Endothelial cell of umbilical vein (primary cell): ENCODE measurements at regions of chr7 and their contacts with region 1.

Region 1: GRCh38 chr7:37297546-37297945 is 151.1 kb downstream of the ELMO1 start:
- DNase-seq: peak; percentile 93
- H3K4me3 ChIP-seq: no peak overlapping the region
- H3K27ac ChIP-seq: no peak overlapping the region
- H3K4me1 ChIP-seq: peaks cover 10% of the 10 kb centered on the region
- H3K27me3 ChIP-seq: no peaks in the 10 kb centered on the region
- CTCF ChIP-seq: no peak
- POLR2A ChIP-seq: no peak

Region 2: DNA sequence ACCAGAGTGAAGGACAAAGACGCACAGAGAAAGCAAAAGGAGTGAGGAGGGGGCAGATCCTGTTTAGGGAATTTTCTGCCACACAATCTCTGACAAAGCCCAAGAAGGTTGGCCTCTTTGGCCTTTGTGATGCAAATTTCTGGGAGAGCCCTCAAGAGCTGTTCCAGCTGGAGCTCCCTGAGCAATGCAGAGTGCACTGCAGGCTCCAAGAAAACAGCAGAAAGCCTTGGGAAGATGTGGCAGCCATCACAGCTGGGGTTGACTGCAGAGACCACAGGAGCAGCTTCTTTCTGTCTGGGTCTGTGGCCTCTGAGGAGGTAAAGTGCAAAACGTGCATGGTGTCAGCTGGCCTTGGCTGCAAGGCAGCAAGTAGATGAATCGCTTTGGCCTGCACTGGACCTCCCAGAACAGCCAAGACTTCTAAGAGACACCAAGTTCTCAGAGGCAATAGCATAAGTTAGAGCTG is 49.1 kb before region 1 on chr7:
- CTCF ChIA-PET with region 1: no interaction called
- POLR2A ChIA-PET with region 1: no interaction called
- dilution Hi-C with region 1: no loop called
- intact Hi-C with region 1: no loop called
- DNase-seq: no peak
- H3K4me3 ChIP-seq: no peak overlapping the region
- H3K27ac ChIP-seq: no peak overlapping the region
- H3K4me1 ChIP-seq: no peaks in the 10 kb centered on the region
- H3K27me3 ChIP-seq: no peaks in the 10 kb centered on the region
- CTCF ChIP-seq: no peak
- POLR2A ChIP-seq: no peak

Region 3: DNA sequence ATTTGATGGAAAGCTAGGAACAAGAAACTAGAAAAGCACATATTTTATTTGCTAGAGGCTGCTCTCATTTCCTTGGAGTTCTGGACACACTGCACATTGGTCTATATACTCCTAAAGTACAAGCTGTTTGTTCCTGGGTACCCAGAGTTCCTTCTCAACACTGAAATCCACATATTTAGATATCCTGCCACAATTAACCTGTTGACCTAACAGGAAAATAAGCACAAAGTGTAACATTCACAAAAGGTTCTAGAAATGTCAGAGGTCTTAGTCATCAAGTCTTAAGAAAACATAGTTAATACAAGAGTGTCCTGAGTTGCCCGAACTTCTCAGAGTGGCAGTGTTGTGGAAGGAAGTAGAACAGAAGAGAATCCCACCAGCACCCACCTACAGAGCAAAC is 35.5 kb after region 1 on chr7:
- CTCF ChIA-PET with region 1: no interaction called
- POLR2A ChIA-PET with region 1: no interaction called
- dilution Hi-C with region 1: no loop called
- intact Hi-C with region 1: loop called (anchors 1 kb)
- DNase-seq: peak; percentile 58
- H3K4me3 ChIP-seq: no peak overlapping the region
- H3K27ac ChIP-seq: no peak overlapping the region
- H3K4me1 ChIP-seq: peaks cover 16% of the 10 kb centered on the region
- H3K27me3 ChIP-seq: no peaks in the 10 kb centered on the region
- CTCF ChIP-seq: no peak
- POLR2A ChIP-seq: no peak